ENCODE measurements at regions of chr1 and their contacts with region 1.

Region 1: DNA sequence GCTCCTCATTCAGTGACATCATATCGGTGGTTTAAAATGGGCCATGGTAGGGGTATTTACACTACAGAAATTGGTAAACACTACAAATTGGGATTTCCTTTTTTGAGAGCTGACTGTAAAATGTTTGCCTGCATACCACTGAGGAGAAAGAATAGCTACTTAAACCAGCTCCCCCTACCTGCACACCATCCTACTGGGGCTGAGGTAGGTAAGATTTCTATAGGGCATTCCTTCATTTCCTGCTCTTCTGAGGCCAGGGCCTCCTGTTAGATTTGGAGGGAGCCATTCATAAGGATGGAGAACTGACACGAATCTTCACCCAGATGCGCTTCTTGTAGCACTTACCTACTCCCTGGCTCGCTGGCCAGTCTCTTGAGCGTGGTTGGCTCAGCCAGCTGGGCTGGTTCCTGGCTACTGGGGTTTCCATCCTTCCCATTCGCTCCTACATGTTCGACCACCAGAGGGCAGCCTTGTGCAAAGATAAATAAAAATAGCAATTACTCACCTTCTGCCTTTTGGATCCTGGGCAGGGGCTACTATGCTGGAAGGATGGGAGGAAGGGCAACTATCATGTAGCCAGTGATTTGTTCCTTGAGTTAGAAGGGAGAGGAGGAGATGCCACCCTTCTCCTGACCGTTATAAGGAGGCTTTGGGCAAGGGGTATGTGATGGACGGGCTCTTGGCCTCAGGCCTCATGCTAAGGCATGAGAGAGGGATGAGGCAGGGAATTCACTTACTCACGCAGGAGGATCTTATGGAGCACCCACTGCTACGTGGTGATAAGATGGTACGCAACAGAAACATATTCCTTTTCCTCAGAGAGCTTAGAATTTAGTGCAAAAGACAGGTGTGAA is 10.7 kb downstream of the OPTC start:
- DNase-seq: peak; percentile 23
- H3K4me3 ChIP-seq: no peak overlapping the region
- H3K27ac ChIP-seq: no peak overlapping the region
- H3K4me1 ChIP-seq: peaks cover 10 to 42% (median 20%) of the 10 kb centered on the region in 3 donors
- H3K27me3 ChIP-seq: peaks cover 0 to 4% (median 0%) of the 10 kb centered on the region in 4 donors
- CTCF ChIP-seq: peak; percentile 73 to 92 (median 88)
- POLR2A ChIP-seq: no peak

Region 2: DNA sequence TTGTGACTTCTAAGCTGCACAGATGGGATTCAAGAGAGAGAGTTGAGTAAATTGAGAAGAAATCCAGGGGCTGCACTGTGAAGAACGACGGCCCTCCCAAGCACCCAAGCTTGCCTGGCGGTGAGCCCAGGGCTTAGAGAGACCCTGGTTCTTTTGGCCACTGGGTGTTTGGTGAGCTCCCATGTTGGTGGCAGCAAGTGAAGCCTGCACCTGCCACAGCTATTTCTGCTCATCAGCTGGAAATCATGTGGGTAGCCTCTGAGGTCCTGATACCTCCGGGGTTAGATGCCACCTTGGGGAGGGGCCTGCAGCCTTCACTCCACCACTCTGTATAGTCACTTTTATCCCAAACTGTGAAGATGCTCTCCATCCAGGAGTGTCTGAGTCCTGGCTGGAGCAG is 205.5 kb before region 1 on chr1:
- intact Hi-C with region 1: no loop called
- DNase-seq: no peak
- H3K4me3 ChIP-seq: no peak overlapping the region
- H3K27ac ChIP-seq: peak overlapping the region in 1 of 4 donors; percentile 20
- H3K4me1 ChIP-seq: peaks cover under 1 to 32% (median 6%) of the 10 kb centered on the region in 3 donors
- H3K27me3 ChIP-seq: no peaks in the 10 kb centered on the region
- CTCF ChIP-seq: no peak
- POLR2A ChIP-seq: no peak

Region 3: DNA sequence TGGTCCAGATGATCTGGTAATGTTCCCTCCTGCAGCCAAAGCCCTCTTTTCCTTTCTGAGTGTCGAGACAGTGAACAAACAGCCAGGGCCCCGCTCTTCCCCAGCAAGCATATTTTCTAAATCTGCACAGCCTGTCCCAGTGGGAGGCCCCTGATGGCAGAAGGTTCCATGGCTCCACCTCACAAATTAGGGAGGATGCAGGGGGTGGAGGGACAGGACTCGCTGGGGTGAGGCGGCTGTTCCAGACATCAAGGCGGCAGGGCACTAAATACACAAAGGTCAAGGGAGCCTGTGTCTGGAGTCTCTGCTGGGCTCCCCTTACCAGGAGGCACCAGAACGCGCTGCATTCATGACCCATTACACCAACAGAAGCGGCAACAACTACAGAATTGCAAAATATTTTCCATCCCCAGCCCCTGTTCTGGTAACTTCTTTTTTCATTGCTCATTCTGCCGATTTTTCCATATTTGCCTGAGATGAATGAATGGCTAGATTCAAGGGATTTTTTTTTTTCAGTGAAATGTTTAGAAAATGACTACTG is 56.0 kb before region 1 on chr1:
- intact Hi-C with region 1: no loop called
- DNase-seq: no peak
- H3K4me3 ChIP-seq: no peak overlapping the region
- H3K27ac ChIP-seq: peak overlapping the region in 3 of 4 donors; percentile 36 to 47 (median 41)
- H3K4me1 ChIP-seq: peaks cover 0 to 14% (median 0%) of the 10 kb centered on the region in 3 donors
- H3K27me3 ChIP-seq: peaks cover 0 to 29% (median 0%) of the 10 kb centered on the region in 4 donors
- CTCF ChIP-seq: no peak
- POLR2A ChIP-seq: no peak

Region 4: DNA sequence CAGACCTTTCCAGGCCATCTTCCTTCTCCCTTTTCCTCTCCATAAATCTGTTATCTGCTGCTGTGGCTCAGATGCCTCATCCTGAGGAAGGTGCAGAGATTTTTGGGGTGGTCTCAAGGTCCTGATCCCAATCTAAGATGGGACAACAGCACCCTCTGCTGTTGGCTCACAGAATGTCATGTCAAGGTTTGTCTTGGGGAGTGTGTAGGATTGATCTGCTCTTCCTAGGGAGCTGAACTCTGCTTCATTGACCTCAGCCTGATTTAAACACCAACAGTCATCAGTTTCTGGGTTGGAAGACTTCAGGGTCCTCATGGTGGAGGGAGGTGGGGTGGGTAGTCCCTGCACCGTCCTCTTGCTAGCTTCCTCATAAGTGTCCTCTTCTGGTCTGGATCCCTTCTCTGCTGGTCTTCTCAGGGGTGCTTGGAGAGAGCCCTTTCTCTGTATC is 197.5 kb after region 1 on chr1:
- intact Hi-C with region 1: loop called (anchors 2 kb)
- DNase-seq: no peak
- H3K4me3 ChIP-seq: no peak overlapping the region
- H3K27ac ChIP-seq: peak overlapping the region in 2 of 4 donors; percentile 24
- H3K4me1 ChIP-seq: peaks cover 0 to 33% (median 0%) of the 10 kb centered on the region in 3 donors
- H3K27me3 ChIP-seq: no peaks in the 10 kb centered on the region
- CTCF ChIP-seq: peak; percentile 75 to 93 (median 90)
- POLR2A ChIP-seq: no peak

Measured in esophagus squamous epithelium (tissue), 5 donors.